Posterior vena cava (tissue), 2 donors: ENCODE measurements at regions of chr12 and their contacts with region 1.

Region 1: GRCh38 chr12:108193917-108194316 is 64.8 kb downstream of the WSCD2 start:
- DNase-seq: no peak

Region 2: DNA sequence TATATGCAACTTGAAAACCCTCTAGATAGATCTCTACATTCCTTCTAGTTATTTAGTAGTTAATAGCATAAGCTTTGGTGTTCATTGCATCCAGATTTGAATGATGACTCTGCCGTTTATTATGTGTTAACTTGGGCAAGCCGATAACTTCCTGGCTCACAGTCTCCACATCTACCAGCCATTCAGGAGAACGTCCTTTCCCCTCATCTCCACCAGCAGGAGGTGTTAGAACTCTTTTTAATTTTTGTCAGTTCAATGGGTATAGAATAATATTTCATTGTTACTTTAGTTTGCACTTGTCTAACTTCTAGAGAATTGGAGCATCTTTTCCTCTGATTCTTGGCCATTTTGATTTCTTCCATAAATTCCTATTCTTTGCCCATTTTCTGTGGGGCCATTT is 94.8 kb before region 1 on chr12:
- intact Hi-C with region 1: loop called (anchors 10 kb)
- DNase-seq: no peak

Region 3: GRCh38 chr12:108133482-108133881 is 60.4 kb before region 1 on chr12:
- intact Hi-C with region 1: loop called in 1 of 2 experiments (anchors 10 kb)
- DNase-seq: no peak